ENCODE measurements at regions of chr1 and their contacts with region 1.

Region 1: DNA sequence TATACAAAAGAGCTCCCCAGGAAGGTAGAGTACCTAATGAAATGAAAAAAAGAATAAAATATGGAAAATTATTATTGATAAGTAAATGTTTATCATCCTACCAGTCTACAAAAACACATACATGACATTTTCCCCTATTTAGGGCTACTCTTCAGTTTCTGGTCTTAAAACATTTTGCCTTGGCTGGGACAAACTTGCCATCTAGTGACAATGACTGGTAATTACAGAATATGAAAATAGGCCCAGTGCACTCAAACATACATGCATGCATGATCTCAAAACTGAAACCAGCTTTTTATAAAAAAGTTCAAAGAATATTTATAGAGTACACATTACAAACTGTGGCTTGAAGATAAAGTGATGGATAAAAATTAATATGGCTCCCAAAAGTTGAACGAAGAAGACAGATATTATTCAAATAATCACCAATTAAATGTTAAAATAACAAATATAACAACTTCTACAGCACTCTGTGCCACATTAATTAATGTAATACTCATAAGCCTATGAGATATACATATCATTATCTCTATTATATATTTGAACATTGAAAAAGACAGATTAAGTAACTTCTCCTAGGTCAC is 10.5 kb upstream of the RNPC3 start:
- DNase-seq: peak; percentile 8
- H3K4me3 Mint-ChIP-seq: no peak overlapping the region
- H3K27ac Mint-ChIP-seq: peak overlapping the region; percentile 76
- H3K4me1 Mint-ChIP-seq: peaks cover 24% of the 10 kb centered on the region
- H3K27me3 Mint-ChIP-seq: no peaks in the 10 kb centered on the region

Region 2: GRCh38 chr1:102550729-102551384 is 964.2 kb before region 1 on chr1:
- CTCF ChIA-PET with region 1: no interaction called
- intact Hi-C with region 1: loop called (anchors 1 kb)
- DNase-seq: peak; percentile 11
- H3K4me3 Mint-ChIP-seq: no peak overlapping the region
- H3K27ac Mint-ChIP-seq: no peak overlapping the region
- H3K4me1 Mint-ChIP-seq: no peaks in the 10 kb centered on the region
- H3K27me3 Mint-ChIP-seq: no peaks in the 10 kb centered on the region

Region 3: GRCh38 chr1:102961549-102961948 is 553.5 kb before region 1 on chr1:
- CTCF ChIA-PET with region 1: no interaction called
- intact Hi-C with region 1: no loop called
- DNase-seq: no peak
- H3K4me3 Mint-ChIP-seq: no peak overlapping the region
- H3K27ac Mint-ChIP-seq: no peak overlapping the region
- H3K4me1 Mint-ChIP-seq: no peaks in the 10 kb centered on the region
- H3K27me3 Mint-ChIP-seq: no peaks in the 10 kb centered on the region

Region 4: GRCh38 chr1:103106426-103107341 is 408.3 kb before region 1 on chr1:
- CTCF ChIA-PET with region 1: interaction called, 3 read pairs
- intact Hi-C with region 1: loop called (anchors 1 kb)
- DNase-seq: no peak
- H3K4me3 Mint-ChIP-seq: no peak overlapping the region
- H3K27ac Mint-ChIP-seq: no peak overlapping the region
- H3K4me1 Mint-ChIP-seq: peaks cover 9% of the 10 kb centered on the region
- H3K27me3 Mint-ChIP-seq: peaks cover 30% of the 10 kb centered on the region

Region 5: GRCh38 chr1:103448560-103448959 is 66.5 kb before region 1 on chr1:
- CTCF ChIA-PET with region 1: interaction called, 4 read pairs
- intact Hi-C with region 1: loop called (anchors 2 kb)
- DNase-seq: no peak
- H3K4me3 Mint-ChIP-seq: no peak overlapping the region
- H3K27ac Mint-ChIP-seq: no peak overlapping the region
- H3K4me1 Mint-ChIP-seq: peaks cover 12% of the 10 kb centered on the region
- H3K27me3 Mint-ChIP-seq: no peaks in the 10 kb centered on the region

Region 6: DNA sequence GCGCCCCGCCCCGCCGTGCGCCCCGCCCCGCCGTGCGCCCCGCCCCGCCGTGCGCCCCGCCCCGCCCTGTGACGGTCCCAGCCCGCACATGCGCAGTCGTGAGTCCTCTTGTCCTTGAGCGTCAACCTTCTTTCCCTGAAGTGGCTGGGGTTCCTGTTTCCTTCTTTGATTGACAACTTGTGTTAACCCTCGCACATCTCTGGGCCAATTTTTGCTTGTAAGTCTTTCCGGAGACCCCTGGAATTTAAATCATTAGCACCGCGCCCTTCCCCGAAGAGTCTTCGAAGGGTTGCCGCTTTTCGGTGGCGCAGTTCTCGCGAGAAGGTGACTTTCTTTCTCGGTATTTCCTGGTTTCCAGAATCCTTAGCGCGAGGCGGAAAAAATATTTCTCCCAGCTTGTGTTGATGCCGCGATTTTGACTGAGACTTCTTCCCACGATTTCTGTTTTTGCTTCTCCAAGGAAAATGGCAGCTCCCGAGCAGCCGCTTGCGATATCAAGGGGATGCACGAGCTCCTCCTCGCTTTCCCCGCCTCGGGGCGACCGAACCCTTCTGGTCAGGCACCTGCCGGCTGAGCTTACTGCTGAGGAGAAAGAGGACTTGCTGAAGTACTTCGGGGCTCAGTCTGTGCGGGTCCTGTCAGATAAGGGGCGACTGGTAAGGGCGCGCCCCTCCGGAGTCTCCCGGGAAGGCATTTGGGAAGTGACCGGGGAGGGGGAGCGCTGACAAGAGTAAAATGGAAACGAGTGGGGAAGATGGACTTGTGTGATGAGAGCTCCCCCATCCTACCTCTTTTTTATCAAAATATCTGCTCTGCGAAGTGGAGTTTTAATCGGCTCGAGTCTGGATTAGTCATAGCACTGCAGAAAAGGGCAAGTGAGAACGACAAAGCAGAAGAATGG is 10.8 kb after region 1 on chr1 and contains the start of gene RNPC3:
- CTCF ChIA-PET with region 1: interaction called, 11 read pairs
- intact Hi-C with region 1: loop called (anchors 1 kb)
- DNase-seq: peak; percentile 88
- H3K4me3 Mint-ChIP-seq: peak within 1 kb of the TSS; percentile 96
- H3K27ac Mint-ChIP-seq: peak within 1 kb of the TSS; percentile 99
- H3K4me1 Mint-ChIP-seq: peaks cover 51% of the 10 kb centered on the region
- H3K27me3 Mint-ChIP-seq: no peaks in the 10 kb centered on the region
- total RNA-seq, gene RNPC3: 14.8 to 15.5 TPM

Measured in activated naive CD4-positive, alpha-beta T cell treated with anti-CD3 and anti-CD28 coated beads for 36 hours (primary cell).